ENCODE measurements at regions of chr1 and their contacts with region 1.

Region 1: GRCh38 chr1:19179597-19180264 is 30.3 kb downstream of the UBR4 start:
- DNase-seq: peak; percentile 91 to 98 (median 92)
- H3K4me3 ChIP-seq: peak overlapping the region in 3 of 7 experiments; percentile 33 to 44 (median 37)
- H3K27ac ChIP-seq: peak overlapping the region; percentile 52 to 79
- H3K4me1 ChIP-seq: peaks cover 11 to 20% (median 15%) of the 10 kb centered on the region in 4 experiments
- H3K27me3 ChIP-seq: no peaks in the 10 kb centered on the region

Region 2: DNA sequence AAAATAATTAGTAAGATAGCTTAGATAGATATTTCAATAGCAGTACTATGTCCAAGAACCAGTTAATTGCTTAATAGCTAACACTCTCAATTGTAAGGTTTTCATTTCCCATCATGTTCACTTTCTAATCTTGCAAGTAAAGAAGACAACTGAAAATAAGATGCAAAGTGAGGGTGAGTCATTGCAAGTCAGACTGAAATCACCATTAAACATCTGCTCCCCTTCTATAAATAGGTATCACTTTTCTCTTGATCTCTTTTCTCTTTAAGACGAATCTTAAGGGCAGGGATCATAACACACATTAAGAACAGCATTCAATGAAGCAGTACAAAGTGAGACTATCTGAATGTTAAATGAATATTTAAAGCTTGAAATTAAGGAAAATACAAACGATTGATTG is 10.1 kb before region 1 on chr1:
- CTCF ChIA-PET with region 1: interaction called, 20 read pairs
- POLR2A ChIA-PET with region 1: interaction called, 3 read pairs
- DNase-seq: peak in 1 of 3 donors; percentile 12
- H3K4me3 ChIP-seq: no peak overlapping the region
- H3K27ac ChIP-seq: no peak overlapping the region
- H3K4me1 ChIP-seq: no peaks in the 10 kb centered on the region
- H3K27me3 ChIP-seq: no peaks in the 10 kb centered on the region

Region 3: DNA sequence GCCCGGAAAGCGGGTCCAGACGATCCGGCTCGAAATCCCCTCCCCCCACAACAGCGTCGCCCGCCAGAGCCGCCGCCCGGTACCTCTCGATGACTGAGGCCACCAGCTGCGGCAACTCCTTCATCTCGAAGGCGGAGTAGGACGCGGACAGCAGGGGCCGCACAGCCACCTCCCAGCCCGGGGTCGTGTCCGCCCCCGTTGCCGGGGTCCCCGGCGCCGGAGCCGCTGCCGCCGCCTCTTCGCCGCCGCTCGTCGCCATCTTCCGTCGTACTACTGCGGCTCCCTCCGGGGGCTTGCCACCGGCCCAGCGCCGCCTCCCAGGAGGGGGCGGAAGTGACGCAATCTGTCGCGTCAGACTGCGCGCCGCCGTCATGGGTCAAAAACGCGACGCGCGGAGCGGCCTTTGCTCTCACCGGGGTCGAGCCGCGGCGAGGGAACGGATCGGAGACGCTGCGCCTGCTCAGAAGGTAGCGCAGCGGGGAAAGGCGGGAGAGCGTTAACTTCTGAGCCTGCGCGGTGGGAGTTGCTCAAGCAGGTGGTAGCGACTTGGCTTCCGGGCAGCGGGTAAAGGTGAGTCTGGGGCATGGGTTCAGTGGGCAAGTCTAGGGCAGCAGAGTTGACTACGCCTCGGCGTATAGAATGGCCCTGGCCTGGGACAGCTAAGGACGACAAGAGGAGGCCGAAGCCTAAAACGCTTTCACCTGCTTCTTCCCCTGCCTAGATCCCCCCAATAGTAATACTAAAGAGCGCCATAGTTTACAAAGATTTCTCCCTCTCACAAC is 30.4 kb after region 1 on chr1 and contains the start of gene UBR4:
- CTCF ChIA-PET with region 1: interaction called, 12 read pairs
- POLR2A ChIA-PET with region 1: interaction called, 15 read pairs
- DNase-seq: peak; percentile 95 to 97 (median 97)
- H3K4me3 ChIP-seq: peak within 1 kb of the TSS; percentile 91 to 99 (median 96)
- H3K27ac ChIP-seq: peak within 1 kb of the TSS; percentile 95 to 98
- H3K4me1 ChIP-seq: peaks cover 24 to 63% (median 43%) of the 10 kb centered on the region in 4 experiments
- H3K27me3 ChIP-seq: no peaks in the 10 kb centered on the region

Region 4: GRCh38 chr1:19240673-19241538 is 61.2 kb after region 1 on chr1:
- CTCF ChIA-PET with region 1: interaction called, 17 read pairs
- POLR2A ChIA-PET with region 1: interaction called, 3 read pairs
- DNase-seq: peak; percentile 61 to 80 (median 77)
- H3K4me3 ChIP-seq: no peak overlapping the region
- H3K27ac ChIP-seq: peak overlapping the region in 1 of 2 experiments; percentile 67
- H3K4me1 ChIP-seq: peaks cover 0 to 2% (median under 1%) of the 10 kb centered on the region in 4 experiments
- H3K27me3 ChIP-seq: no peaks in the 10 kb centered on the region